Brain microvascular endothelial cell (primary cell): ENCODE measurements at regions of chr6 and their contacts with region 1.

Region 1: GRCh38 chr6:122839477-122839876 is 50.4 kb downstream of the SMPDL3A start:
- DNase-seq: peak; percentile 61
- H3K4me3 ChIP-seq: no peak overlapping the region
- H3K27ac ChIP-seq: no peak overlapping the region
- H3K27me3 ChIP-seq: no peaks in the 10 kb centered on the region
- CTCF ChIP-seq: peak; percentile 74

Region 2: GRCh38 chr6:122491919-122492555 is 347.4 kb before region 1 on chr6:
- in situ Hi-C with region 1: loop called (anchors 25 kb)
- DNase-seq: peak; percentile 71
- H3K4me3 ChIP-seq: no peak overlapping the region
- H3K27ac ChIP-seq: no peak overlapping the region
- H3K27me3 ChIP-seq: no peaks in the 10 kb centered on the region
- CTCF ChIP-seq: peak; percentile 98

Region 3: GRCh38 chr6:122589115-122589514 is 250.4 kb before region 1 on chr6:
- in situ Hi-C with region 1: no loop called
- DNase-seq: no peak
- H3K4me3 ChIP-seq: no peak overlapping the region
- H3K27ac ChIP-seq: no peak overlapping the region
- H3K27me3 ChIP-seq: no peaks in the 10 kb centered on the region
- CTCF ChIP-seq: no peak

Region 4: DNA sequence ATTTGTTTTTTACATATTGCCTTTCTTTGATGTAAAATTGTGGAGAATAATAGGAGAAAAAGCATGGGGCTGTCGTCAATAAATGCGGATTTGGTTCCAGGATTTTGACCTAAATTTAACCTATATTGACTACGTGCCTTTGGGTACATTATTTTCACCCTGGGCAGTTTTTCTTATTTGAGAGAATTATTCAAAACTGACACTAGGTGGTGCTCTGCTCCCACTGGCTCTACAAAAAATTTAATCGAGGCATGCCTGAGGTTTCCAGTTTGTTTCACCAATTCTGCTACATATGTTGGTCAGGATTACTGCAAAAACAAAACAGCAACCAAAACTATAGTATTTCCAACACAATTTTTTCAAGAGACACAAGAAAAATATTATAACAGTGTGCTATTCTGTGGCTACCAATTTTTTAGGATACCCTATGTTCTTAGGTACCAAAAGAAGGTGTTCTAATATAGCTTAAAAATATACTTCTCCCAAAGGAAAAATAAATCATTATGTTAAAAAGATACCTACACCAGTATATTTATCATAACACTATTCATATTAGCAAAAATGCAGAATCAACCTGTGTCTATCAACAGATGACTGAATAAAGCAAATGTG is 108.6 kb before region 1 on chr6:
- in situ Hi-C with region 1: loop called (anchors 25 kb)
- DNase-seq: peak; percentile 15
- H3K4me3 ChIP-seq: no peak overlapping the region
- H3K27ac ChIP-seq: no peak overlapping the region
- H3K27me3 ChIP-seq: no peaks in the 10 kb centered on the region
- CTCF ChIP-seq: peak; percentile 71

Region 5: GRCh38 chr6:123022975-123023374 is 183.5 kb after region 1 on chr6:
- in situ Hi-C with region 1: no loop called
- DNase-seq: peak; percentile 0
- H3K4me3 ChIP-seq: no peak overlapping the region
- H3K27ac ChIP-seq: no peak overlapping the region
- H3K27me3 ChIP-seq: no peaks in the 10 kb centered on the region
- CTCF ChIP-seq: no peak